ENCODE measurements at regions of chr3 and their contacts with region 1.

Region 1: GRCh38 chr3:15708882-15709677 is 88.7 kb downstream of the ANKRD28 start:
- DNase-seq: no peak
- H3K4me3 Mint-ChIP-seq: no peak overlapping the region
- H3K27ac Mint-ChIP-seq: no peak overlapping the region
- H3K4me1 Mint-ChIP-seq: peaks cover 5% of the 10 kb centered on the region
- H3K27me3 Mint-ChIP-seq: no peaks in the 10 kb centered on the region

Region 2: DNA sequence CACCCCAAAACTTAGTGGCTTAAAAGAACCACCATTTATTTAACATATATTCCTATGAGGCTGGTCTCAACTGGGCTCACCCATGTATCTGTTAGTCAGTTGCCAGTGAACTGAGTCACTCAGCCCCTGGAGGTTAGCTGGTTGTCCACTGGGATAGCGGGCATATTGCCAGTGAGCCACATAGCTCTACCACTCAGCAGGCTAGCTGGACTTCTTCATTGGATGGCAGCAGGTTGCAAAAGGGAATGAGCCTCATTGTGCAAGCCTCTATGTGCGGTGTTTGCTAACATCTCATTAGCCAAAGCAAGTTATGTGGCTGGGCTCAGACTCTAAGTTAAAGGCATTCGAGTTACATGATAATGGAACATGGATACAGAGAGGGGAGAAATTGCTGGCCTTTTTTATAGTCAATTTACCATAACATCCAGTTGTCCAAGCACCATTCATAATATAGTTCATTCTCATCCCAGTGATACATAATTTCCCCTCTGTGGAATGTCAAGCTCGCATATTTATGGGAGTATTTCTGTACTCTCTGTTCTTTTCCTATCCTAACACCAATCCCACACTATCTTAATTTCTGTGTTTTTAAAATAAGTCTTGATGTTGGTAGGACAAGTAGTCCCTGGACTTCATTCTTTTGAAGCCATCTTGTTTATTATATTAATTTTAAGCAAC is 98.9 kb before region 1 on chr3:
- intact Hi-C with region 1: no loop called
- DNase-seq: no peak
- H3K4me3 Mint-ChIP-seq: no peak overlapping the region
- H3K27ac Mint-ChIP-seq: no peak overlapping the region
- H3K4me1 Mint-ChIP-seq: no peaks in the 10 kb centered on the region
- H3K27me3 Mint-ChIP-seq: peaks cover 10% of the 10 kb centered on the region

Region 3: GRCh38 chr3:15693355-15693754 is 15.7 kb before region 1 on chr3:
- intact Hi-C with region 1: loop called (anchors 1 kb)
- DNase-seq: no peak
- H3K4me3 Mint-ChIP-seq: no peak overlapping the region
- H3K27ac Mint-ChIP-seq: no peak overlapping the region
- H3K4me1 Mint-ChIP-seq: peaks cover 8% of the 10 kb centered on the region
- H3K27me3 Mint-ChIP-seq: no peaks in the 10 kb centered on the region

Region 4: GRCh38 chr3:15726043-15726442 is 17.0 kb after region 1 on chr3:
- intact Hi-C with region 1: loop called (anchors 2 kb)
- DNase-seq: no peak
- H3K4me3 Mint-ChIP-seq: no peak overlapping the region
- H3K27ac Mint-ChIP-seq: peak overlapping the region; percentile 50
- H3K4me1 Mint-ChIP-seq: peaks cover 32% of the 10 kb centered on the region
- H3K27me3 Mint-ChIP-seq: no peaks in the 10 kb centered on the region

Measured in activated T-helper 1 cell treated with anti-CD3 and anti-CD28 coated beads, Interleukin-12 subunit alpha, Interleukin-12 subunit beta, Interleukin-2, Interleukin-4 antibody, amounts not matched to agents 30 ng/mL and 10 ng/mL and 1 ng/mL, durations not matched to agents 14 hours and 24 hours and 36 hours (primary cell).